ENCODE measurements at regions of chr13 and their contacts with region 1.

Region 1: GRCh38 chr13:25001476-25002206 is 94.3 kb upstream of the PABPC3 start:
- DNase-seq: no peak
- ATAC-seq: no peak
- H3K4me3 ChIP-seq: no peak overlapping the region
- H3K27ac ChIP-seq: no peak overlapping the region
- H3K4me1 ChIP-seq: no peaks in the 10 kb centered on the region
- H3K27me3 ChIP-seq: peaks cover 0 to 46% (median 27%) of the 10 kb centered on the region in 7 donors
- CTCF ChIP-seq: no peak

Region 2: DNA sequence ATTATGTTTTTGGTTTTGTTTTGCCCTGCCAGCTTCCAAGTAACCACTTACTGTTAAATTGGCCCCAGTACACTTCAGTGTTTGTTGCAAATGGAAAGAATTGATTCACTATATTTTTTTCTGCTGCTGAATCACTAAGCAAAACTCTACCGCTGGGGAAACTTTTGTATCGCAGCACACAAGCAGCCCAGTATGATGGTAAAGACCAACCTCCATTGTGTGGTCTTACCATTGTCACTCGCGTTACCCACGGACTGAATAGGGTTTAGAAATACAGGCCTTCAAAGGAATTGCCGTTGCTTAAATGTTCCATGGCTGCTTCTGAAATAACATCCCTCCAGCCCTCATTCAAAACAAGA is 833.3 kb before region 1 on chr13:
- intact Hi-C with region 1: no loop called
- DNase-seq: no peak
- ATAC-seq: no peak
- H3K4me3 ChIP-seq: no peak overlapping the region
- H3K27ac ChIP-seq: no peak overlapping the region
- H3K4me1 ChIP-seq: peaks cover 0 to 30% (median 0%) of the 10 kb centered on the region in 9 donors
- H3K27me3 ChIP-seq: peaks cover 0 to 4% (median 0%) of the 10 kb centered on the region in 7 donors
- CTCF ChIP-seq: no peak

Region 3: DNA sequence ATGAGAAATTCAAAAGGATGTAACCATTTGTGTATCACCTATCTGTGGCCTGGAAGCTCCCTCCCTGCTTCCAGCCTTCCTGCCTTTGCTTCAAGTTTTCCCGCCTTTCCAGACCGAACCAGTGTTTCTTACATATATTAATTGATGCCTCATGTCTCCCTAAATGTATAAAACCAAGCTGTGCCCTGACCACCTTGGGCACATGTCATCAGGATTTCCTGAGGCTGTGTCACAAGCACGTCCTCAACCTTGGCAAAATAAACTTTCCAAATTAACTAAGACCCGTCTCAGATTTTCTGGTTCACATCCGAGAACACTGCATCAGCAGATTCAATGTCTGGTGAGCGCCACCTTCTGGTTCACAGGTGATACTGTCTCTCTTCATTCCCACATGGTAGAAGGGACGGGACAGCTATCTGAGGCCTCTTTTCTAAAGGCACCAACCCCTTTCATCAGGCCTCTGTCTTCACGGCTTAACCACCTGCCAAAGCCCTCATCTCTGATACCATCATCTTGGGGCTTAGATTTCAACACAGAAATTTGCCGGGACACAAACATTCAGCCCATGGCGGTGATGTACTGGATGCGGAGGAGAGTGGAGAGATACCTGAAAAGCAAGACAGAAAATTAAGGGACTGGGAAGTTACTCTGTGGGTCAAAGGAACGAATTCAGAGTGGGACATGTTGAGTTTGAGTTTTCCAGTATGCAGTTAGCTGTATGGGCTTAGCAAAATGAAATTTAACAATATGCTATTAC is 35.6 kb after region 1 on chr13:
- intact Hi-C with region 1: loop called in 6 of 10 experiments (anchors 2 to 5 kb)
- DNase-seq: peak in 1 of 2 donors; percentile 50
- ATAC-seq: peak in 6 of 8 donors; percentile 61 to 77 (median 65)
- H3K4me3 ChIP-seq: no peak overlapping the region
- H3K27ac ChIP-seq: no peak overlapping the region
- H3K4me1 ChIP-seq: no peaks in the 10 kb centered on the region
- H3K27me3 ChIP-seq: peaks cover 0 to 65% (median 43%) of the 10 kb centered on the region in 7 donors
- CTCF ChIP-seq: peak; percentile 45 to 81 (median 76)

Region 4: DNA sequence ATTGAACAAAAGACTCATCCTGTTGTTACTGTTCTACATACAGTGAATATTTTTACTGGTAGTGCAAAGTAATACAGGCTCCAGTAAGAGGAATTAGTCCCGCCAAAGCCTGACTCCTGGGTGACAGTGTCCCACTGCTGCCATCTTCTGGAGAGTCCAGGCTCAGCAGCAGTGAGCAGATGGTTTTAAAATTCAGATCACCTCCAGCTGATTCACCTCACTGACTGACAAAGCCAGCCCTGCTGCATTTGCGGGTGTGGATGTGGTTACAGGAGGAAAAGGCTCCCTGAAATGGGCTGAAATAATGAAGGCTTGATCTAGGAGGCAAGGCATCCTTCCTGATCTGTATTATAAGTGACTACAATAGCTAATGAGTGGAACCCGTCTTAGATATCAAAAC is 112.6 kb after region 1 on chr13:
- intact Hi-C with region 1: loop called in 6 of 10 experiments (anchors 10 kb)
- DNase-seq: peak; percentile 37 to 48
- ATAC-seq: peak in 4 of 8 donors; percentile 61 to 82 (median 71)
- H3K4me3 ChIP-seq: no peak overlapping the region
- H3K27ac ChIP-seq: no peak overlapping the region
- H3K4me1 ChIP-seq: no peaks in the 10 kb centered on the region
- H3K27me3 ChIP-seq: peaks cover 0 to 49% (median 28%) of the 10 kb centered on the region in 7 donors
- CTCF ChIP-seq: peak; percentile 42 to 83 (median 79)

Region 5: DNA sequence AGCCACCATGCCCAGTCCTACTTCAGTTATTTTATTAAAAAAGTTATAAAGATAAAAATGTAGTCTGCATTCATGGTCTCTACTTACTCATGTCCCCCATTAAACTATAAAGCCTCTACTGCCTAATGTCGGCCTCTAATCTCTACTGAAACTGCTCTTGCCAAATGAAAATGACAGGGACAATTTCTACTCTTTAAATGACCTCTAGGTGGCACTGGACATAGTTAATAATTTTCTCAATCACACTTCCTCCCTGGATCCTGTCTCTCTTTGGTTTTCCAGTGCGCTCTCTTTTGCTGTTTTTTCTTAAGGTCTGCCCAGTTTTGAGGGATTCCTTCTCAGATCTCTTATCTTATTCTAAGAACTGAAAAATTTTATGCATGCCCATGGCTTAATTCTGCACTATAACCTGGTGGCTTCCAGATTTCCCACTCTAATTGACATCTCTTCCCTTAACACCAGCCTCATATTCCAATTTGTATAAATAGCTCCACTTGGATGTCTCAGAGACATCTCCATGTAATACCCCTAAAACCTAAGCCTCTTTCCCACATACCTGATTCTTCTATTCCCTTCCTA is 231.4 kb after region 1 on chr13:
- intact Hi-C with region 1: no loop called
- DNase-seq: no peak
- ATAC-seq: peak in 2 of 8 donors; percentile 47 to 59
- H3K4me3 ChIP-seq: no peak overlapping the region
- H3K27ac ChIP-seq: no peak overlapping the region
- H3K4me1 ChIP-seq: peaks cover 0 to 5% (median 0%) of the 10 kb centered on the region in 9 donors
- H3K27me3 ChIP-seq: peaks cover 0 to 13% (median 2%) of the 10 kb centered on the region in 7 donors
- CTCF ChIP-seq: peak in 8 of 9 donors; percentile 46 to 67 (median 60)

Region 6: GRCh38 chr13:25574437-25575411 is 573.1 kb after region 1 on chr13:
- intact Hi-C with region 1: loop called in 1 of 10 experiments (anchors 5 kb)
- DNase-seq: peak; percentile 15 to 85
- ATAC-seq: peak; percentile 65 to 94 (median 90)
- H3K4me3 ChIP-seq: no peak overlapping the region
- H3K27ac ChIP-seq: no peak overlapping the region
- H3K4me1 ChIP-seq: no peaks in the 10 kb centered on the region
- H3K27me3 ChIP-seq: peaks cover 0 to 69% (median 40%) of the 10 kb centered on the region in 7 donors
- CTCF ChIP-seq: peak; percentile 53 to 90 (median 84)

Region 7: GRCh38 chr13:26074706-26075105 is 1073.1 kb after region 1 on chr13:
- intact Hi-C with region 1: loop called in 2 of 10 experiments (anchors 10 kb)
- DNase-seq: no peak
- ATAC-seq: no peak
- H3K4me3 ChIP-seq: no peak overlapping the region
- H3K27ac ChIP-seq: no peak overlapping the region
- H3K4me1 ChIP-seq: no peaks in the 10 kb centered on the region
- H3K27me3 ChIP-seq: peaks cover 0 to 31% (median 22%) of the 10 kb centered on the region in 7 donors
- CTCF ChIP-seq: peak in 1 of 9 donors; percentile 14